MCF 10A (cell line): ENCODE measurements at regions of chr5 and their contacts with region 1.

Region 1: DNA sequence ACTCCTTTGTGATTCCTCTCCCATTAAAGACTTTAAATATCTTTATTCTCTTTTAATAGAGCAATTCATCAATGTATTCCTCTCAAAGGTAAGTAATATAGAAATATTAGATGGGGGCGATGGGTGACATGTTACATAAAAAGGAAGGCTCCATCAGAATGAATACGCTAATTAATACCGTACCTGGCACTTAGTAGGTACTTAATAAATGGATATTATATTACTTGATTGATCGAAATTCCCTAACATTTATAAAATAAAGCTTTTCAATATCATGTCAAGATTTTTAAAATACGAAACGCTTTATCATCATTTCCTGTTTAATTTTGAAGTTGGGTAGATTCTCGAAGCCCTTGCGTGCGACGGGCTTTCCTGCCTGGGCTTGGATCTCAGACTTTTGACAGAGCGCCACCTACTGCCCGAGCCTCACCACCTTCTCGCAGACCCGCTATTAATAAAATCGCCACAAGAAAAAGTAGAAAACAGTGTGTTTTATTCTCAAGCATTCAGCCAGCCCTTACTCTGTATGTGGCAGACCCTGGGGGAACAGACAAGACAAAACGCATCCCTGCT is 99.4 kb downstream of the C5orf15 start:
- DNase-seq: peak; percentile 80
- H3K4me3 Mint-ChIP-seq: no peak overlapping the region
- H3K27ac Mint-ChIP-seq: no peak overlapping the region
- H3K4me1 Mint-ChIP-seq: no peaks in the 10 kb centered on the region
- H3K27me3 Mint-ChIP-seq: peaks cover 70% of the 10 kb centered on the region
- CTCF ChIP-seq: peak; percentile 86

Region 2: DNA sequence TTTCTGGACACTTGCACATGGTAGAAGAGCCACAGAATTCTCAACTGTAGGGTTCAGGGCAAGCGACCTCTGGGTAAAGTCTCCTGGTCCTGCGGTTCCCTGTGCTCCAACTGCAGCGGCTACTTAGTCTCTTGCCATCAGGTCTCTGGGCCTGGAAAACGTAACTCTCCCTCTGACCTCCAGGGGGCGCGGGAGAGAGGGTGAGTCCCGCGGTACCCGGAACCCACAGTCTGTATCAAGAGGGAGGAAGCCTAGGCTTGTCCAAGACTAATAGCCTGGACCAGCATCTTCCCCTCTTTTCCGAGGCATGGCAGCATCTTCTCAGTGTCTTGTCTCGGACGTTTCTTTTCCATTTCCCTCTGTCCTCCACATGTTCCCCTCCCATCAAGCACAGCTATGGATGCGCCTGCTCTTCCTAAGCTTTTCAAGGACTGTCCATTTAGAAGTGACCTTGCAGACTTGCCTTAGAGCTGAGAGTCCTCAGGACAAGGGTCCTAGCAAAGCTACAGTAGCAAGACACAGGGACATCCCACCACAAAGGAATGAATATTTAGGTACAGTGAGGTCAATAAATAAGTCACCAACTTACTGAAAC is 316.0 kb before region 1 on chr5:
- CTCF ChIA-PET with region 1: interaction called, 7 read pairs
- POLR2A ChIA-PET with region 1: no interaction called
- intact Hi-C with region 1: loop called (anchors 1 kb)
- DNase-seq: peak; percentile 79
- H3K4me3 Mint-ChIP-seq: no peak overlapping the region
- H3K27ac Mint-ChIP-seq: no peak overlapping the region
- H3K4me1 Mint-ChIP-seq: no peaks in the 10 kb centered on the region
- H3K27me3 Mint-ChIP-seq: peaks cover 100% of the 10 kb centered on the region
- CTCF ChIP-seq: peak; percentile 95

Region 3: GRCh38 chr5:133799571-133800237 is 69.3 kb before region 1 on chr5:
- CTCF ChIA-PET with region 1: interaction called, 10 read pairs
- POLR2A ChIA-PET with region 1: no interaction called
- intact Hi-C with region 1: no loop called
- DNase-seq: no peak
- H3K4me3 Mint-ChIP-seq: no peak overlapping the region
- H3K27ac Mint-ChIP-seq: no peak overlapping the region
- H3K4me1 Mint-ChIP-seq: no peaks in the 10 kb centered on the region
- H3K27me3 Mint-ChIP-seq: peaks cover 67% of the 10 kb centered on the region
- CTCF ChIP-seq: no peak

Region 4: DNA sequence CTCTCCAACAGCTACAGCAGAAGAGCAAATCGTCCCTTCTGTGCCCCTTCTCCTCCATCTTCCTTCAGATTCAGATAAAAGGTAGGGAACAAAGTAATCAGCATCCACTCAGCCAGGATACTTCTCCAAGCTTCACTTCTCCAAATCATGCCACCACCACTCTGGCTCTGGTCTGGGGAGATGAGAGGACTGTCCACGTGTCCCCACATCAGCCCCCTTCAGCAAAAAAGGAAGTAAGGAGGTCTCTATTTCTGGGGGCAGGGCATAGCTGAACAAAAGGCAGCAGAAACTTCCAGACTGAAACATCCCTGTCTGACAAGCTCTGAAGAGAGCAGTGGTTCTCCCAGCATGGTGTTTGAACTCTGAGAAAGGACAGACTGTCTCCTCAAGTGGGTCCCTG is 17.5 kb before region 1 on chr5:
- CTCF ChIA-PET with region 1: interaction called, 17 read pairs
- POLR2A ChIA-PET with region 1: no interaction called
- intact Hi-C with region 1: no loop called
- DNase-seq: no peak
- H3K4me3 Mint-ChIP-seq: no peak overlapping the region
- H3K27ac Mint-ChIP-seq: no peak overlapping the region
- H3K4me1 Mint-ChIP-seq: no peaks in the 10 kb centered on the region
- H3K27me3 Mint-ChIP-seq: peaks cover 76% of the 10 kb centered on the region
- CTCF ChIP-seq: no peak

Region 5: DNA sequence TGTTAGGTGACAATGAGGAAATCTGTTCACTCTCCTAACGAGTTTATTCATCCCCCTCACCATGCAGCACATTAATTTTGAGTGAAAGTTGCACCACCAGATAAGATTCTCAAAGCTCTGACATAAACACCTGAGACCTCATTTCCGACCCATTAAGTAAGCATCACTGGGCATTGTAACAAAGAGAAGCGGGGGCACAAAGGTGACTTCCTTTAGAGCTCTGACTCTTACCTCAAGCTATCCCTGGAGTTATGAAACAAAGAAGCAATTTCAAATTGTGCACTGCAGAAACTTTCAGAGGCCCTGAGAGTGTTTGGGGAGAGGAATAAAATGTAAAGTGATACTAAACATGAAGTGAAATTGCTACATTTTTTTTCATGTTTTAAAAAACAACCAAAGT is 69.9 kb after region 1 on chr5:
- CTCF ChIA-PET with region 1: interaction called, 17 read pairs
- POLR2A ChIA-PET with region 1: interaction called, 3 read pairs
- intact Hi-C with region 1: no loop called
- DNase-seq: no peak
- H3K4me3 Mint-ChIP-seq: no peak overlapping the region
- H3K27ac Mint-ChIP-seq: no peak overlapping the region
- H3K4me1 Mint-ChIP-seq: no peaks in the 10 kb centered on the region
- H3K27me3 Mint-ChIP-seq: no peaks in the 10 kb centered on the region
- CTCF ChIP-seq: no peak

Region 6: GRCh38 chr5:134975078-134975715 is 1106.2 kb after region 1 on chr5:
- CTCF ChIA-PET with region 1: no interaction called
- POLR2A ChIA-PET with region 1: no interaction called
- intact Hi-C with region 1: no loop called
- DNase-seq: peak; percentile 20
- H3K4me3 Mint-ChIP-seq: no peak overlapping the region
- H3K27ac Mint-ChIP-seq: no peak overlapping the region
- H3K4me1 Mint-ChIP-seq: peaks cover 6% of the 10 kb centered on the region
- H3K27me3 Mint-ChIP-seq: no peaks in the 10 kb centered on the region
- CTCF ChIP-seq: no peak